ENCODE measurements at regions of chr9 and their contacts with region 1.

Region 1: DNA sequence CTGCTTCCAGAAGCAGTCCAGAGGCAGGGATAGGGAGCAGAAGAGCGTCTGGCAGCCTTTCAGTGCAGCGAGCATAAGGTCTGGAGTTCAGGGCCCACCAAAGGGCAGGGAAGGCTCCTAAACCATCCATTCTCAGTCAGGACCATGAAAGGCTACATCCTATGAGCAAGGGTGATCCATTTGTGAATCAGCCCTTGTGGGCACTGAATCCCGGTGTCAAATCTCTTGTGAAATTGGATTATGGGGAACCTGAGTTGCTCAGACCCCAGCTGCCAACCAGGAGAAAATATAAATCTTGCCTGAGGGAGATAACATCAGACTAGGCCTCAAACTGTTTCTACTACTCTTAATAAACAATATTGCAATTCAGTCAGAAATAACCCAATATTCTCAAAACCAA is 204.4 kb downstream of the SYK start:
- DNase-seq: no peak
- ATAC-seq: no peak
- H3K4me3 ChIP-seq: no peak overlapping the region
- H3K27ac ChIP-seq: no peak overlapping the region
- H3K4me1 ChIP-seq: no peaks in the 10 kb centered on the region
- H3K27me3 ChIP-seq: no peaks in the 10 kb centered on the region

Region 2: GRCh38 chr9:91089405-91090129 is 83.5 kb after region 1 on chr9:
- intact Hi-C with region 1: loop called in 1 of 2 experiments (anchors 2 kb)
- DNase-seq: no peak
- ATAC-seq: peak; percentile 64
- H3K4me3 ChIP-seq: no peak overlapping the region
- H3K27ac ChIP-seq: no peak overlapping the region
- H3K4me1 ChIP-seq: no peaks in the 10 kb centered on the region
- H3K27me3 ChIP-seq: no peaks in the 10 kb centered on the region